ENCODE measurements at regions of chr17 and their contacts with region 1.

Region 1: DNA sequence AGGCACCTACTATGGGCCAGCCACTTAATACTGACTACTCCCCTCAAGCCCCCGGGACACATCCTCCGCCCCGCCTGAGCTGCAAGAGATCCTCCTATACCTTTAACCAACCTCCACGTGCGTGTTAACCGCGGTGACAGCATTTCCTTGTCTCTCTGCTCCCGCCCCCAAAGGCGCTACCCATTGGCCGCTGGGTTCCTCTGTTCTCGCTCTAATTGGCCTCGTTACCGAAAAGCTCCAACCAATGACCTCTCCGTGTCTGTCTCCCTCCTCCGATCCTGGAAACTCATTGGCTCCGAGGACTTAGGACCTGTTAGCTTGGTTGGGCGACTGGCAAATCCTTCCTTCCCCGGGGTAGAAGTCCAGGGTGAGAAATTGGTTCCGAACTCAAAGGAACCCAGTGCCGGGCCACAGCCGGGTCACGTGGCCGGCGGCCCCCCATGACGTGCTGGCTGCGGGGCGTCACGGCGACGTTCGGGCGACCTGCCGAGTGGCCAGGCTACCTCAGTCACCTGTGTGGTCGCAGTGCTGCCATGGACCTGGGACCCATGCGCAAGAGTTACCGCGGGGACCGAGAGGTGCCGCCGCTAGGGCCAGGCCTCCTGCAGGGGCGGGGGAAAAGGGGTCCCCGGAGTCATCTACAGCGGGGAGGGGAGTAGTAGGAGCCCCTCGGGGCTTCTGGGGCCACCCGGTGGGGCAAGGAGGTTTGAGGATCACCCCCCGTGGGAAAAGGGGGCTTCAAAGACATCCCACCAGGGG is at the start of gene PNPO:
- H3K4me3 ChIP-seq: peak within 1 kb of the TSS; percentile 79
- H3K27ac ChIP-seq: peak within 1 kb of the TSS; percentile 61; the same call in 1 of the 2 replicates
- H3K4me1 ChIP-seq: no peaks in the 10 kb centered on the region
- CTCF ChIP-seq: peak; percentile 64; the same call in 1 of the 2 replicates

Region 2: GRCh38 chr17:47866941-47867340 is 74.5 kb before region 1 on chr17:
- CTCF ChIA-PET with region 1: no interaction called
- POLR2A ChIA-PET with region 1: no interaction called
- H3K4me3 ChIP-seq: no peak overlapping the region
- H3K27ac ChIP-seq: no peak overlapping the region
- H3K4me1 ChIP-seq: no peaks in the 10 kb centered on the region; the same call in 1 of the 2 replicates
- CTCF ChIP-seq: no peak

Region 3: DNA sequence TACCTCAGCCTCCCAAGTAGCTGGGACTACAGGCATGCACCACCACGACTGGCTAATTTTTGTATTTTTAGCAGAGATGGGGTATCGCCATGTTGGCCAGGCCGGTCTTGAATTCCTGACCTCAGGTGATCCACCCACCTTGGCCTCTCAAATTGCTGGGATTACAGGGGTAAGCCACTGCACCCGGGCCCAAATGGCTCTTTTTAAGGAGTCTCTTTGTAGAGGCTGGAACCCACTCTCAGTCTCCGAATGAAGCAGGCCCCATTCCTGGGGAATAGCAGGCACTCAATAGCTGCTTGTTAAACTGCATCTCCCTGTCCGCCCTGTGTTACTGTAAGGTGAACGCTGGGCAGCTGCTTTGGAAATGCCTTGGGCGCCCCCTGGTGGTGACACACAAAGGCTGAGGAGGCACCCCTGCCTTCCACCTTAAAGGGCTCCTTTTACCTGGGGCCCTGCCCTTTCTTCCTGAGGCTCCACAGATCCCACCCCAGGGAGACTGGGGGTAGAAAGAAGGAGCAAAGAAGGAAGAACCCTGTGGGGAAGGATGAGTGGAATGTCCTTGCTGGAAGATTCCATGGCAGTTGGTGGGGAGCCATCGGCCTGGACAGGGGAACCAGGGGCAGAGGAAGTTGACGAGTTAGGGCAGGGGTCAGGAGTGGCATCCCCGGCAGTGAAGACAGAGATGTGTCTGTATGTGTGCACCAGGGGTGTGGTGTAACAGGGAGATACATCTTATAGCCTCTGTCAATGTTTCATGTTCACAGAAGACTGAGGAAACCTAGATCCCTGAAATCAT is 51.5 kb before region 1 on chr17:
- CTCF ChIA-PET with region 1: interaction called, 10 read pairs
- POLR2A ChIA-PET with region 1: interaction called, 29 read pairs
- H3K4me3 ChIP-seq: no peak overlapping the region
- H3K27ac ChIP-seq: no peak overlapping the region
- H3K4me1 ChIP-seq: peaks cover 2% of the 10 kb centered on the region; the same call in 1 of the 2 replicates
- CTCF ChIP-seq: peak; percentile 94

Region 4: GRCh38 chr17:47895856-47896671 is 45.4 kb before region 1 on chr17 and contains the start of gene SP2:
- CTCF ChIA-PET with region 1: interaction called, 10 read pairs
- POLR2A ChIA-PET with region 1: interaction called, 29 read pairs
- H3K4me3 ChIP-seq: peak within 1 kb of the TSS; percentile 95
- H3K27ac ChIP-seq: peak within 1 kb of the TSS; percentile 98
- H3K4me1 ChIP-seq: peaks cover 4% of the 10 kb centered on the region; the same call in 1 of the 2 replicates
- CTCF ChIP-seq: no peak; the same call in 1 of the 2 replicates

Region 5: DNA sequence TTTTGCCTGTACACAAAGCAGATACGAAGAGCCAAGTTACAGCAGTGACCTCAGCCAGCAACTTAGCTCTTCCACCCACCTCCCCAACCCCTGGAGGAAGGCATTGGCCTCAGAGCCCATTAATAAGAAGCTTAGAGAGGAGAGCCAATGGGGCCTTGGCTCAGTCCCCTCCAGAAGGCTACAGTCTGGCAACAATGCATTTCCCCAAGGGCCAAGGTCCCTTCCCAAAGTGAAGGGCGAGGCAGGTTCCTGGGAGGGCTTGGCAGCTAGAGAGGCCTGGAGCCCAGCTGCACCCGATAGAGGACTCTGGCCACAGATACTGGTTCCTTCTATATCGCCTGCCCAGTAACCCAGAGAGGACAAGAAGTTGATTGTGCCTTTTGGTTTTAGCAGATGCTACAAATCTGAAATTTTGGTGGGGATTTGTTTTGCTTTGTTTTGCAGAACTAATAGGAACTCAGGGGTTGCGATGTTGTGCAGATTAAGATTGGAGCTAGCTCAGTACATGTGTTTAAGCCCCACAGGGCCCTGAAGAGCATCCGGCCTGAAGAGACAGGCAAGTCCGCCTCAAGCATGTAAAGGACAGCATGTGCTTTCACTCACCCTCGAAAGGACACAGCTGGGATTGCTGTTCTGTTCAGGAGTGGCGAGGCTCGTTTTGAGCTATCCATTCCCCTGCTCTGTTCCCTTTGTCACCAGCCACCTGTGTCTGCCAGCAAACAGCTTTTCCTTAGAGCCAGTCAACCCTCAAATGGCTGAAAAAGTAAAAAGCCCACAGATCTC is 12.0 kb before region 1 on chr17:
- CTCF ChIA-PET with region 1: interaction called, 5 read pairs
- POLR2A ChIA-PET with region 1: interaction called, 13 read pairs
- H3K4me3 ChIP-seq: no peak overlapping the region
- H3K27ac ChIP-seq: no peak overlapping the region
- H3K4me1 ChIP-seq: no peaks in the 10 kb centered on the region
- CTCF ChIP-seq: no peak

Region 6: DNA sequence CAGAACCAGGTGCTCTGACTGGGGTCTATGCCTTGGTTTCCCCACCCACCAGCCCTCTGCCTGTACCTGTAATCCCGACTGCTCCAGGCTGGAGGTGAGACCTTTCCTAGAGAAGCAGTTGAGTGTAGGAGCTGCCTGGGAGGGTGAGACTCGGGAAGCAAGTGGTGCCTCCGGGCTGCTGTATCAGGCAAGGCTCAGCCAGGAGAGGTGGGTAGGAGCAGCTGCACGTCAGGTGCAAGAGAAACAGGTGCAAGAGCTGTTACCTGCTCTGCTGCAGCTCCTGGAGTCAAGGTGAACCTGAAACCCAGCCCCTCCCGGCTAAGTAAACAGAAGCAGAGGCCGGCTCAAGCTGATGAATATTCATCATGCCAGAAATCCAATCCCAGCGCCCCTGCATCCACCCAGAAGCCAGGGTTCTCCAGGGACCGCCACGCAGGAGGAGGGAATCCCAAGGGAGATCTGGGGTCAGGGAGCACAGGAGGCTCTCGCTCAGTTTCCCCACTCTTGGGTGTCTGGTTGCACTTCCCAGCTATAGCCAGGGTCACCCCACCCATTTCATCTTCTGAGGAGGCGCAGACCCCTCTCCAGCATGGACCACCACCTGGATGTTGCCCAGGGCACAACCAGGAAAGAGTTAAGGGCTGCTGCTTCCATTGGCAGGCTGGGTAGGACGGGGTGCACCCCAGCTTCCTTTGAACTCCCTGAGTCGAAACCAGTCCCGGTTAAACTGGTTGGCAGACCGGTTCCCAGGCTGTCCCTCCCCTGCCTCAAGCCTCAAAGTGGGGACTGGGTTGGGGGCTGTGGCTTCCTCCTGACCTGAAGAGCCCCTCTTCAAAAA is 16.4 kb after region 1 on chr17 and contains the start of gene PRR15L:
- CTCF ChIA-PET with region 1: interaction called, 124 read pairs
- POLR2A ChIA-PET with region 1: interaction called, 16 read pairs
- H3K4me3 ChIP-seq: no peak within 1 kb of the TSS
- H3K27ac ChIP-seq: peak within 1 kb of the TSS; percentile 36; the same call in 1 of the 2 replicates
- H3K4me1 ChIP-seq: peaks cover 28% of the 10 kb centered on the region
- CTCF ChIP-seq: no peak

Region 7: DNA sequence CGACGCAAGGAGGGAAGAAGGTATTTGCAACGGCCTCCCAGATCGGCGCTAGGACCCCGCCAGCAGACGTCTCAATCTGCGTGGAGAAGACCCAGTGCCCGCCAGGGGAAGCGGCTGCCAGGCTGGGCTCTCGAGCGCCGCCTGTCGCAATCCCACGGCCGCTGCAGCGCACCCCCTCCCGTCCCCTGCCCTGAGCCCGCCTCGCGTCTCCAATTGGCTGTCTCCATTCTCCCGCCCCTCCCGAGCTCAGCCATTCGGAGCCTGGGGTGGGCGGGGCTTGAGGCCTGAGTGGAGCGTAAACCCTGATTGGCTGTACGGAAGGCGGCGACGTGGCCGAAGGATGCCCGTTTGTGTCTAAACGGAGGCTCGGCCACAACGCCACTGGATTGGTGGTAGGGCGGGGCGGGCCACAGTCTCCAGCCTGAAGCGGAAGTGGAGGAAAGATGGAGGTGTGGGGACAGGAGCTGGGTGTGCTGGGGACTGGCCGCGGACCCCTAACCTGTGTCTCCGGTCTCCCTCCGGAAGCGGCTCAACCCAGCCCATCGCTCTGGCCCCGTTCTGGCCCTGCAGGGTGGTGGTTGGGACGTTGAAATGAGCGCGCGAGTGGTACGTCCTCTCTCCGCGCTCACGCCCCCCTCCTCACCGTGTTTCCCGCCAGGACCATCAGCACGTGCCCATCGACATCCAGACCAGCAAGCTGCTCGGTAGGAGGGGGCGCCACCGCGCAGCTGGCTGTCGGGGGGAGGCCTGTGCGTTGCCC is 29.5 kb after region 1 on chr17 and contains the start of gene CDK5RAP3:
- CTCF ChIA-PET with region 1: interaction called, 592 read pairs
- POLR2A ChIA-PET with region 1: interaction called, 37 read pairs
- H3K4me3 ChIP-seq: peak within 1 kb of the TSS; percentile 87
- H3K27ac ChIP-seq: peak within 1 kb of the TSS; percentile 69; the same call in 1 of the 2 replicates
- H3K4me1 ChIP-seq: peaks cover 7% of the 10 kb centered on the region; the same call in 1 of the 2 replicates
- CTCF ChIP-seq: peak; percentile 99